ENCODE measurements at regions of chr2 and their contacts with region 1.

Region 1: DNA sequence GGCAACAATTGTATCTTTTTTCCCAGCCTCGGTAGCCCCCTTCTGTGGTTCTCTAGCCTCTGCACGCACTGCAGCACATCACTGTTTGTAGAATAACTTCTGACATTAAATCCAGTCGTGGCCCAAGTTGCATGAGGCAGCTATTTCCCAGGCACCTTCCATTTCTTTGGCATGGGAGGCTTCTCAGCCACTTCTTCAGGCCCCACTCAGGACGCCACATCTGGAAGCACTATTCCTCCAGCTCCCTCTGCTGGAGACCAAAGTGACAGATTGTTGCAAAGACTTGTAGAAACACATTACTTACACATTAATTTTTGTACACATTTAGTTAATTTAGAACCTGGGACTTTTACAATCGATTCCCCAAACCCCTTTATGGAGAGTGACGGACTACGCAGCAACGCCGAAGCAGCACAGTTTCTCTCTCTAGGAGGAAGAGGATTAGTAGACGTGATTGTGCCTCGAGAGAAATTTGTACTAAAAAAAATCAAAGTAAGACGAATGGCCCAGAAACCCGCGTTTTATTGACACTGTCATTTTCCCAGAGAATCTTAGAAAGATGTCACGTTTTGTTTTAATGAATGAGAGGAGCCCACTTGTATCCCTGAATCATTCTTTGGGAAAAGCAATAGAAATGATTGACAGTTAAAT is 57.8 kb upstream of the RGPD5 start:
- DNase-seq: peak; percentile 73
- H3K4me3 ChIP-seq: no peak overlapping the region
- H3K27ac ChIP-seq: no peak overlapping the region
- H3K4me1 ChIP-seq: no peaks in the 10 kb centered on the region
- H3K27me3 ChIP-seq: peaks cover 0 to 4% of the 10 kb centered on the region in 2 experiments
- CTCF ChIP-seq: peak; percentile 53 to 58
- POLR2A ChIP-seq: no peak

Region 2: DNA sequence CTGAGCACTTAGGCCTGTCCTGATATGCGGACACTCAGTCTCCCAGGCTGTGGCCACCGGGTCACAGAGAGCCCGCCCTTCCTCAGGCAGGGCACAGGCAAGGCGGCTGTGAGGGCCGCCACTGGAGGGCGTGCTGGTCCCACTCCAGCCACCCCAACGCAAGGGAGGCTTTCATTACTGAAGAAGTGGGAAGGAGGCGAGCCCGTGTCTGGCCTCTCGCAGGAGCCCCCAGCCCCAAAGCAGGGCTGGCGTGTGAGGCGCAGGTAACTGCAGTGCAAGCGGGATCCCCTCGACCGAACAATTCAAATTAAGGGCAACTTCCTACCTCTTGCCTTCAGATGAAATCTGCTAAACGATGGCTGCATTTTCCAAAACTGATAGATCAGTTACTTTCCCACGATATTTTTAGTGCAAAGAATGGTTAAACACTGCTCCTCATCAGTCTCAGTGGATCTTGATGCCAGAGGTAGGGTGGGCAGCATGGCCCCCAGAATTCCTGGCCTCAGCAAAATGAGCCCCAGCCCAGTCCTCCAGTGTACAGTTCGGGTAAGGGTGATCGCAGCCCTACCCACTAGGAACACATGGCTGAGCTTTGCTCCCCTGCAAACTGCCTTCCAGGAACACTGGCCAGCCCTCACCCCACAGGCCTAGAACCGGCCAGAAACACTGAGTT is 219.7 kb before region 1 on chr2:
- CTCF ChIA-PET with region 1: interaction called, 16 read pairs
- POLR2A ChIA-PET with region 1: no interaction called
- dilution Hi-C with region 1: no loop called
- intact Hi-C with region 1: loop called (anchors 1 kb)
- DNase-seq: peak; percentile 60
- H3K4me3 ChIP-seq: no peak overlapping the region
- H3K27ac ChIP-seq: no peak overlapping the region
- H3K4me1 ChIP-seq: no peaks in the 10 kb centered on the region
- H3K27me3 ChIP-seq: no peaks in the 10 kb centered on the region
- CTCF ChIP-seq: peak; percentile 84 to 95
- POLR2A ChIP-seq: no peak

Region 3: DNA sequence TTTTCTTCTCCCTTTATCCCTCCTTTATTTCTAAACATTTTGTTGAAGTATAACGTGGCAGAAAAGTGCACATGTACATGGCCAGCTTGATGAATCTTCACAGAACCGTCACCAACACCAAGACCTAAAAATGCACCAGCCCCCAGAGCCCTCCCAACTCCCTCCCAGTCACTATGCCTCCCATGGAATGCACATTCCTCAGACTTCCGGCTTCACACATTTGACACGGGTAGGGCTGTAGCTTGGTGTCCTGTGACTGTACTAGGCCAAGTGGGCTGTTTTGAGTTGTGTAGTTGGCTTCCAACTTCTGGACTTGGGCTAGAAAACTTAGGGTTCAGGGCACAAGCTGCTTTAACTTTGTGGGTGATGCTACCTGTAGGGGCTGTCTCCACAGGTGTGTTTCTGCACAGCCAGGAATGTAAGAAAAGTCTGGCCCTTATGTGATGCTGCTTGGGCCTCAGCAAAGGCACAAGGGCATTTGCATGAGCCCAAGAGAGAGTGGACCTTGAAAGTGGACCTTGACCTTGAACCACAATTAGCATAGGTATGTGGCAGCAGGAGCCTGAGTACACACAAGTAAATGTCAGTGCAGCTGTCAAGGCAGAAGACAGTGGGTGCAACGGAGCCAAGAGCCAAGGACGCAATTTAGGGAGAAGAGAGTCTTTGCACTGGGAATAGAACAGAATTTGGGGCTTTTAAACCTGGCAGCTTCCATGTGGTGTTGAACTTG is 200.9 kb before region 1 on chr2:
- CTCF ChIA-PET with region 1: interaction called, 16 read pairs
- POLR2A ChIA-PET with region 1: no interaction called
- dilution Hi-C with region 1: no loop called
- intact Hi-C with region 1: no loop called
- DNase-seq: no peak
- H3K4me3 ChIP-seq: no peak overlapping the region
- H3K27ac ChIP-seq: no peak overlapping the region
- H3K4me1 ChIP-seq: no peaks in the 10 kb centered on the region
- H3K27me3 ChIP-seq: peaks cover 10% of the 10 kb centered on the region in 2 experiments
- CTCF ChIP-seq: no peak
- POLR2A ChIP-seq: no peak

Region 4: GRCh38 chr2:109604597-109604996 is 131.7 kb before region 1 on chr2:
- CTCF ChIA-PET with region 1: interaction called, 10 read pairs
- POLR2A ChIA-PET with region 1: no interaction called
- dilution Hi-C with region 1: no loop called
- intact Hi-C with region 1: no loop called
- DNase-seq: no peak
- H3K4me3 ChIP-seq: no peak overlapping the region
- H3K27ac ChIP-seq: no peak overlapping the region
- H3K4me1 ChIP-seq: peaks cover 33% of the 10 kb centered on the region
- H3K27me3 ChIP-seq: no peaks in the 10 kb centered on the region
- CTCF ChIP-seq: no peak
- POLR2A ChIP-seq: no peak

Region 5: DNA sequence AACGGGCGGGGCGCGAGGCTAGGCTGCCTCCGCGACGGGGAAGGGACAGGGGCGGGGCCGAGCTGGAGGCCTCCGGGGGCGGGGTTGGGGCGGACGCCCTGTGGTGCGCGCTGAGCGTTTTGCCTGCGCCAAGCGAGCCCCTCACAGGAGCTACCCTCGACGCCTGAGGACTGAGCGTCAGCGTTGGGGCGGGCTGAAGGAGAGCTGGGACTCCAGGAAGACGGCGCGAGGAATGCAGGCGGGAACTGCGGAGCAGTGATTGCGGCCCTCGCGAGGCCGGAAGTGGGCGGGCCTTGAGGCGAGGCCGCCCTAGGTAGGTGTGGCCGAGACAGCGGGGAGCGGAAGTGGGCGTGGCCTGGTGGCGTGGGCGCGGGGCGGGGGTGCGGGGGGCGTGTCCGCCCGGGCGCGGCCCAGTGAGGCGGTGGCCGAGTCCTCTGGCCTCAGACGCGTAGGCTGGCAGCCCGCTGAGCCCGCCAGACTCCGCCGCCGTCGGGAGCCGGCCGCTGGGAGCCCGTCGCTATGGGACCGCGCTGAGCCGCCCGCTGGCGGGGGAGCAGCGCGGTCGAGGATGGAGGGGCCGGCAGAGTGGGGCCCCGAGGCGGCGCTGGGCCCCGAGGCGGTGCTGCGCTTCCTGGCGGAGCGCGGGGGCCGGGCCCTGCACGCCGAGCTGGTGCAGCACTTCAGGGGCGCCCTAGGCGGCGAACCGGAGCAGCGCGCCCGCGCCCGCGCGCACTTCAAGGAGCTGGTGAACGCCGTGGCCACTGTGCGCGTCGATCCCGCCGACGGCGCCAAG is 122.2 kb before region 1 on chr2 and contains the starts of genes SEPTIN10 and SOWAHC:
- CTCF ChIA-PET with region 1: interaction called, 14 read pairs
- POLR2A ChIA-PET with region 1: no interaction called
- dilution Hi-C with region 1: no loop called
- intact Hi-C with region 1: no loop called
- DNase-seq: peak; percentile 99
- H3K4me3 ChIP-seq: peak within 1 kb of the TSS; percentile 81 to 100 (median 97)
- H3K27ac ChIP-seq: peak within 1 kb of the TSS; percentile 92
- H3K4me1 ChIP-seq: peaks cover 39% of the 10 kb centered on the region
- H3K27me3 ChIP-seq: no peaks in the 10 kb centered on the region
- CTCF ChIP-seq: no peak
- POLR2A ChIP-seq: peak; percentile 84
- total RNA-seq, gene SEPTIN10: 105 and 121 TPM in 2 replicates
- total RNA-seq, gene SOWAHC: 3.6 and 4.1 TPM in 2 replicates

Region 6: DNA sequence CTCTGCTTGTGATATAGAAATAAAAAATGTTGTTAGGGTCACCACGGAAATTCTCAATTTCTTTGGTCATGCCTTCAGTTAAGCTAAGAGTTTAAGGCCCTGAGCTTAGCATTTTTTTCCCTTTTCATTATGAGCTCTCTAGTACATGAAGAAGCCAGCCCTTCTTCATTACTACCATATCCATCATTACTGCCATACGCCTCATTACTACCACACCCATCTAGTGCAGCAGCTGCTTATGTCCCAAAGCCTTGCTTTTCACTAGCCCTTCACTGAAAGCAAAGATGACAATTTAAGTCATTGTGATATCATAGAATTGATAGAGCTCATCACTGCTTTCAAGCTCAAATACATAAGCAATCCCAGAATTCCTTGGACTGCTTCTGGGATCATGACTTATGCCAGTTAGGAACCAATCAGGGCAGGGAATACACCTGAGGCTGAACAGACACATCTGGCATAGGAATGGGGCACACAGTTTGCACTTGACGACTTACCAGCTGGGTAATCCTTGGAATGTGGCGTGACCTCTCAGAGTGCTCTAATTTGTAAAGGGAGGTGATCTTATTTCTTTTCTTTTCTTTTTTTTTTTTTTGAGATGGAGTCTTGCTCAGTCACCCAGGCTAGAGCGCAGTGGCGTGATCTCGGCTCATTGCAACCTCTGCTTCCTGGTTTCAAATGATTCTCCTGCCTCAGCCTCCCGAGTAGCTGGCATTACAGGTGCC is 81.8 kb before region 1 on chr2:
- CTCF ChIA-PET with region 1: no interaction called
- POLR2A ChIA-PET with region 1: no interaction called
- dilution Hi-C with region 1: no loop called
- intact Hi-C with region 1: no loop called
- DNase-seq: no peak
- H3K4me3 ChIP-seq: no peak overlapping the region
- H3K27ac ChIP-seq: no peak overlapping the region
- H3K4me1 ChIP-seq: no peaks in the 10 kb centered on the region
- H3K27me3 ChIP-seq: peaks cover 3 to 4% of the 10 kb centered on the region in 2 experiments
- CTCF ChIP-seq: no peak
- POLR2A ChIP-seq: no peak

Measured in endothelial cell of umbilical vein (primary cell).